ENCODE measurements at regions of chr19 and their contacts with region 1.

Region 1: DNA sequence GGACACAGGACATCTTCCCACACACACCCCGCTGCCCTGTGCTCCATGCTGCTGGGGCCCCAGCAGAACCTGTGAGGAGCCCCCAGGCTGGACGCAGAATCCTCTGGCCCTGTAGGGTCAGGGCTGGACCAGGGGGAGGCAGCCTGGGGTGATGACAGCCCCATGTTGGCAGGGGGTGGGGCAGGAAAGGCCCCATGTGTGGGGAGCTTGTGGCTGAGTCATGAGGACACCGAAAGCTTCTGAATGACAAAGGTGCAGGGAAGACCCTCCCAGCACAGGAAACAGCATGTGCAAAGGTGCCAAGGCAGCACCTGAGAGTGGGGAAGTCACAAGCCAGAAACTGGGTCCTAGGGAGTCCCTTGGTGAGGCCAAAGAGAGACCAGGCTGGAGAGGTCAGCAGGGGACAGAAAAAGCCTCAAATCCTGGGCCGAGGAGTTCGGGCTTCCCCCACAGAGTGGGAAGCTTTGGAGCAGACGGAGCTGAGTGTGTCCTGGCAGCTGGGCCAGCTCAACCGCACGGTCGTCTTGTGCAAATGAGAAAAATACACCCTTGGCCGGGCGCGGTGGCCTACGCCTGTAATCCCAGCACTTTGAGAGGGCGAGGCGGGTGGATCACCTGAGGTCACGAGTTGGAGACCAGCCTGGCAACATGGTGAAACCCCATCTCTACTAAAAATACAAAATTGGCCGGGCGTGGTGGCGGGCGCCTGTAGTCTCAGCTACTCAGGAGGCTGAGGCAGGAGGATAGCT is 17.5 kb downstream of the ATP8B3 start:
- DNase-seq: no peak
- H3K4me3 Mint-ChIP-seq: no peak overlapping the region
- H3K27ac Mint-ChIP-seq: no peak overlapping the region
- H3K4me1 Mint-ChIP-seq: peaks cover 14% of the 10 kb centered on the region
- H3K27me3 Mint-ChIP-seq: no peaks in the 10 kb centered on the region
- CTCF ChIP-seq: no peak

Region 2: GRCh38 chr19:1540365-1540925 is 254.2 kb before region 1 on chr19:
- CTCF ChIA-PET with region 1: interaction called, 38 read pairs
- POLR2A ChIA-PET with region 1: no interaction called
- intact Hi-C with region 1: loop called (anchors 5 kb)
- DNase-seq: no peak
- H3K4me3 Mint-ChIP-seq: no peak overlapping the region
- H3K27ac Mint-ChIP-seq: no peak overlapping the region
- H3K4me1 Mint-ChIP-seq: no peaks in the 10 kb centered on the region
- H3K27me3 Mint-ChIP-seq: peaks cover 13% of the 10 kb centered on the region
- CTCF ChIP-seq: no peak

Region 3: DNA sequence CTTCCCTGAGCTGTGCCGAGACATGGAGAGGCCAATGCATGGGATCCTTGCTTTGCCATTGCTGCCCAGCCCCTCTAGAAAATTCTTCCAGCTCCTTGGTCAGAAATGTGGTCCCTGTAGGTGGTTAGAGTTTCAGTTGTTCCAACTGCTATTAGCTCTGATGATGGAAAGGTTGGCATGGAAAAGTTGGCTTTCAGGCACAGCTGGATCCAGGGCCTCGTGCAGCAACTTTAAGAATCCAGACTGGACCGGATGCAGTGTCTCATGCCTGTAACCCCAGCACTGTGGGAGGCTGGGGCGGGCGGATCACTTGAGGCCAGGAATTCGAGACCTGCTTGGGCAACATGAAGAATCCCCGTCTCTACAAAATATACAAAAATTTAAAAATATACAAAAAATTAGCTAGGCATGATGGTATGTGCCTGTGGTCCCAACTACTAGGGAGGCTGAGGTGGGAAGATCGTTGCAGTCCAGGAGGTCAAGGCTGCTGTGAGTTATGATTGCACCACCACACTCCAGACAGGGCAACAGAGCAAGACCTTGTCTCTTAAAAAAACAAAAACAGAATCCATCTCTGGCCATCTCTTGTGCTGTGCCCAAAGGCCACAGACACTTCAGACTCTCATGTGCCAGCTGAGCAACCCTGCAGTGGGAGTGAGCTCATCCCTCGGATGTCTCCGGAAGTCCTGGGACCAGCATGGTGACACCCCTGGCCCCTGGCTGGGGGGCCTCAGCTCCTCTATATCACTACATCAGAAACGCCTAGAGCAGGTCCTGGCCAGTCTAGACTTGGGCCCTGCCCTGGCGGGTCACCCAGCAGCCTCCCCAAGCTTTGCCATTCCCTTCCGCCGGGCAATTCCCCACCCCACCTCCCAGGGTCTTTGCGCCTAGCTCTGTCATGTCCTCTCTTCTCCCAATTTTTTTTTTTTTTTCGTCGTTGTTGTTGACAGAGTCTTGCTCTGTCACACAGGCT is 243.2 kb before region 1 on chr19:
- CTCF ChIA-PET with region 1: interaction called, 38 read pairs
- POLR2A ChIA-PET with region 1: no interaction called
- intact Hi-C with region 1: loop called (anchors 5 kb)
- DNase-seq: no peak
- H3K4me3 Mint-ChIP-seq: no peak overlapping the region
- H3K27ac Mint-ChIP-seq: no peak overlapping the region
- H3K4me1 Mint-ChIP-seq: peaks cover 2% of the 10 kb centered on the region
- H3K27me3 Mint-ChIP-seq: no peaks in the 10 kb centered on the region
- CTCF ChIP-seq: no peak

Region 4: DNA sequence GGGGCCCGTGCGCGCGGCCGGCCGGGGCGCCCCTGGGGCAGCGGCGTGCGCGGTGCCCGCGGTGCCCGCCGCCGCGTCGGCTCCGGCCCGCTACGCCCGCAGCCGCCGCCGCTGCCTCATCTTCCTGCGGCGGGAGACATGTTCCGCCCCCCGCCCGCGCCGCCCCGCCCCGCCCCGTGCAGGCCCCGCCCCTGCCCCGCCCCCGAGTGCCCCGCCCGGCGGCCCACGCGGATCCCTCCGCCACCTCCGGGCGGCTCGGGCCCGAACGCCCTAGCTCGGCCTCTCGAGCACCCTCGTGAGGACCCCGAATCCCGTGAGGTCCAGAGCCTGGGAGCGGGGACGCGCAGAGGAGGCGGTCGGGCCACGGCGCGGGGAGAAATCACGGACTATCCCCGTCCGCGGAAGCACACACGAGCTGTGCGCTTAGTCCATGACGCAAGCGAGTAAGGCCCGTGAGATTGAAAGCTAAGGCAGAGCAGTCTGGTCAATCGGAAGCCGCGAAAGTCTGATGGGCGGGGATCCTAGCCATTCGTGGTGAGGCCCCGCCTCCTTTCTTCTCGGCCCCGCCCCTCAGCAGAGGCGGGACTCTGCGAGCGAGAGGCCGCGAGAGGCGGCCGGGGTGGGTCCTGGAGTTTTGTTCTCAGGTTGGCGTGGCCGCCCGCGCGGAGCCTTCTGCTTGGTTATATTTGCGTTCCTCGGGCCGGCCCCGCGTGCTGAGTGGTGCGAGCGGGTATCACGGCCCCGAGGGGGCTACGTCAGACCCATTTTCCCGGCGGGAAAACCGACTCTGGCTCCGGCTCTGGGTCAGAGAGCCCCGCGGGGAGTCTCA is 141.9 kb before region 1 on chr19 and contains the start of gene TCF3:
- CTCF ChIA-PET with region 1: no interaction called
- POLR2A ChIA-PET with region 1: no interaction called
- intact Hi-C with region 1: no loop called
- DNase-seq: peak; percentile 99
- H3K4me3 Mint-ChIP-seq: peak within 1 kb of the TSS; percentile 75
- H3K27ac Mint-ChIP-seq: peak within 1 kb of the TSS; percentile 89
- H3K4me1 Mint-ChIP-seq: no peaks in the 10 kb centered on the region
- H3K27me3 Mint-ChIP-seq: no peaks in the 10 kb centered on the region
- CTCF ChIP-seq: no peak
- total RNA-seq, gene TCF3: 79.7 and 100 TPM in 2 replicates

Region 5: DNA sequence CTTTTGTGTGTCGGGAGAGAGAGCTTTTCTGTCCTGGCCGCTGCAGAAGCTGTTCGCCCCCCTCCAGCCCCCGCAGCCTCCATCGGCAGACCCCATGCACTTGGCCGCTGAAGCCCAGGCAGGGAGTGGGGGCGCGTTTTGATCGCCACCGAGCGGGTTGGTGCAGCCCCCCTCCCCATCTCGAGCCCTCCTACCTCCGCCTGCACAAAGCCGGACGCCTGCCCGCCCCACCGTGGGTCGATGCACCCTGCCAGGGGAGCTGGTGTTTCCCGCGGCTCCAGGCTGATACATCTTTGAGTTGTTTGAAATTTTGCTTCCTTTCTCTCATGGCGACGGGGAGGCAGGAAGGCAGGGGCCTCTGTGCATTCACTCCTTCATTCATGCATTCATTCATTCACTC is 57.7 kb before region 1 on chr19:
- CTCF ChIA-PET with region 1: no interaction called
- POLR2A ChIA-PET with region 1: no interaction called
- intact Hi-C with region 1: no loop called
- DNase-seq: no peak
- H3K4me3 Mint-ChIP-seq: no peak overlapping the region
- H3K27ac Mint-ChIP-seq: no peak overlapping the region
- H3K4me1 Mint-ChIP-seq: no peaks in the 10 kb centered on the region
- H3K27me3 Mint-ChIP-seq: peaks cover 10% of the 10 kb centered on the region
- CTCF ChIP-seq: no peak

Region 6: DNA sequence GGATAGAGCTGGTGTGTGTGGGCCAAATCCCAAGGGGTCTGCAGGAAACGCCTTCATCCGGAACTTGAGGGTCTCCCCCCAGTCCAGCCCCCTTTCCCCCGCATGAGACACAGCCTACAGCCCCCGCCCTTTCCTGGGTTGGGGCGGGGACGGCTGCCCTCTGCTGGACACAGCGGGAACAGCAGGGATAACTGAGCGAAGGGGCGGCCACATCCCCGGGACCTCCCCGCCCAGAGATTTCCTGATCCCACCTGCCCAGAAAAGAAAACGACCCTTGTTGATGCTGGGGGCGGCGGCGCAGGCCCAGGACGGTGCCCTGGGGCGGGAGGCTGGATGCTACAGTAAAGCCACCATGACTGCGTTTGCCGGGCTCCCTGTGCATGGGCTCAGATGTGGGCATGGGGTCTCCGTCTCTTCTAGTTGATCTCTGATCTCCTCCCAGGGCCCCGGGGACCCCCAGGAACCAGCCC is 27.1 kb before region 1 on chr19:
- CTCF ChIA-PET with region 1: interaction called, 8 read pairs
- POLR2A ChIA-PET with region 1: interaction called, 4 read pairs
- intact Hi-C with region 1: loop called (anchors 1 kb)
- DNase-seq: peak; percentile 48
- H3K4me3 Mint-ChIP-seq: no peak overlapping the region
- H3K27ac Mint-ChIP-seq: no peak overlapping the region
- H3K4me1 Mint-ChIP-seq: peaks cover 4% of the 10 kb centered on the region
- H3K27me3 Mint-ChIP-seq: peaks cover 31% of the 10 kb centered on the region
- CTCF ChIP-seq: peak; percentile 94

Region 7: GRCh38 chr19:1780272-1780958 is 14.2 kb before region 1 on chr19:
- CTCF ChIA-PET with region 1: interaction called, 50 read pairs
- POLR2A ChIA-PET with region 1: no interaction called
- intact Hi-C with region 1: no loop called
- DNase-seq: no peak
- H3K4me3 Mint-ChIP-seq: no peak overlapping the region
- H3K27ac Mint-ChIP-seq: no peak overlapping the region
- H3K4me1 Mint-ChIP-seq: peaks cover 5% of the 10 kb centered on the region
- H3K27me3 Mint-ChIP-seq: no peaks in the 10 kb centered on the region
- CTCF ChIP-seq: no peak

Measured in MCF 10A (cell line).